IMR-90 (cell line): ENCODE measurements at regions of chr18 and their contacts with region 1.

Region 1: GRCh38 chr18:30280880-30281470 is 761.6 kb downstream of the DSC3 start:
- DNase-seq: peak; percentile 59
- ATAC-seq: peak; percentile 75
- H3K4me3 ChIP-seq: no peak overlapping the region
- H3K27ac ChIP-seq: no peak overlapping the region
- H3K4me1 ChIP-seq: no peaks in the 10 kb centered on the region
- H3K27me3 ChIP-seq: no peaks in the 10 kb centered on the region
- CTCF ChIP-seq: peak; percentile 70
- POLR2A ChIP-seq: no peak
- RAD21 ChIP-seq: peak; percentile 65

Region 2: GRCh38 chr18:28961669-28962228 is 1319.2 kb before region 1 on chr18:
- CTCF ChIA-PET with region 1: no interaction called
- POLR2A ChIA-PET with region 1: no interaction called
- dilution Hi-C with region 1: no loop called
- in situ Hi-C with region 1: no loop called
- intact Hi-C with region 1: loop called (anchors 5 kb)
- DNase-seq: peak; percentile 22
- ATAC-seq: peak; percentile 49
- H3K4me3 ChIP-seq: no peak overlapping the region
- H3K27ac ChIP-seq: no peak overlapping the region
- H3K4me1 ChIP-seq: no peaks in the 10 kb centered on the region
- H3K27me3 ChIP-seq: no peaks in the 10 kb centered on the region
- CTCF ChIP-seq: peak; percentile 66
- POLR2A ChIP-seq: no peak
- RAD21 ChIP-seq: peak; percentile 75

Region 3: DNA sequence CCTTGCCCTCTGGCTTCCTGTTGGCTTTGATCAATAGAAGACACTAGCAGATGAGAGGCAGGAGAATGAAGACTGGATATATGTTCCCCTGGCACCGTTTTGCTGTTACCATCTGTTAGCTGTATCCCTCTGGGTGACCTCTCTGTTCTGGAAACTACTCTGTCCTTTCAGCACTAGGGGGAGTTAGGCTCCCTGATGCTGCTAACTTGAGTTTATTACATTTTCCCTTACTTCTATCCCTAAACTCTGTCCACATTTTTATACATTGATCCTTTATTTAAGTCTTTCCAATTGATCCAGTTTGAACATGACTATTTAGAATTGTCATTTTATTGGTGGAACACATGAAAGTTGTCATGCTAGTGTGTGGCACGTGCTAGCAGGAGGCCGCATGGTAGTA is 1089.7 kb before region 1 on chr18:
- CTCF ChIA-PET with region 1: interaction called, 4 read pairs
- POLR2A ChIA-PET with region 1: no interaction called
- dilution Hi-C with region 1: no loop called
- in situ Hi-C with region 1: no loop called
- intact Hi-C with region 1: loop called (anchors 5 kb)
- DNase-seq: peak; percentile 45
- ATAC-seq: peak; percentile 77
- H3K4me3 ChIP-seq: no peak overlapping the region
- H3K27ac ChIP-seq: no peak overlapping the region
- H3K4me1 ChIP-seq: peaks cover 4% of the 10 kb centered on the region; the same call in 1 of the 2 replicates
- H3K27me3 ChIP-seq: no peaks in the 10 kb centered on the region
- CTCF ChIP-seq: peak; percentile 49
- POLR2A ChIP-seq: no peak
- RAD21 ChIP-seq: peak; percentile 51

Region 4: GRCh38 chr18:29874519-29875098 is 406.4 kb before region 1 on chr18:
- CTCF ChIA-PET with region 1: interaction called, 5 read pairs
- POLR2A ChIA-PET with region 1: no interaction called
- dilution Hi-C with region 1: no loop called
- in situ Hi-C with region 1: no loop called
- intact Hi-C with region 1: loop called (anchors 1 kb)
- DNase-seq: peak; percentile 20
- ATAC-seq: peak; percentile 40; the same call in 1 of the 2 replicates
- H3K4me3 ChIP-seq: no peak overlapping the region
- H3K27ac ChIP-seq: no peak overlapping the region
- H3K4me1 ChIP-seq: no peaks in the 10 kb centered on the region
- H3K27me3 ChIP-seq: no peaks in the 10 kb centered on the region
- CTCF ChIP-seq: peak; percentile 57
- POLR2A ChIP-seq: no peak
- RAD21 ChIP-seq: peak; percentile 50

Region 5: DNA sequence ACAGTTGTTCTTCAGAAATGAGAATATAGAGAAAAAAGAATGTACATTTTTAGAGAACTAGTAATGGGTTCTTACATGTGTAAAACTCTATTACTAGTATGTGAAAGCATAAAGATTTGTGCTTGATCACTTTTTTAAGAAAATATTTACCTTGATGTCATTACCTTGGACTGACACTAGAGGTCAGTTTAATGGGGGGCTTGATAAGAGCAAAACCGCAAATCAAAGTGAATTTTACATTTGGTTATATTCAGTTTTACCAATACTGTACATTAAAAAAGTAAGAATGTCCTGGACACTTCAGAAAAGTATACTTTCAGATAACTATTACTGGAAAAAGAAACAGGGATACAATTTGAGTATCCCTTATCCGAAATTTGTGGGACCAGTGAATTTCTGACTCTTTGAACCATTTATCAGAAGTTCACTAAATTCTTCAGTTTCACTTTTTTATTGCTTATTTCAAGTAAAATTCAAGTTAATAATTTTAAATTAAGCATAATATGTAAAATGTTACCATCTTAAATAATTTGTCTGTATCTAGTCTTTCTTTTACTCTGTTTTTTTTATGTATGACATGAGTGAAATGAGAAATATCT is 387.9 kb before region 1 on chr18:
- CTCF ChIA-PET with region 1: no interaction called
- POLR2A ChIA-PET with region 1: no interaction called
- dilution Hi-C with region 1: no loop called
- in situ Hi-C with region 1: no loop called
- intact Hi-C with region 1: loop called (anchors 1 kb)
- DNase-seq: no peak
- ATAC-seq: no peak
- H3K4me3 ChIP-seq: no peak overlapping the region
- H3K27ac ChIP-seq: no peak overlapping the region
- H3K4me1 ChIP-seq: no peaks in the 10 kb centered on the region
- H3K27me3 ChIP-seq: no peaks in the 10 kb centered on the region
- CTCF ChIP-seq: peak; percentile 41
- POLR2A ChIP-seq: no peak
- RAD21 ChIP-seq: no peak

Region 6: DNA sequence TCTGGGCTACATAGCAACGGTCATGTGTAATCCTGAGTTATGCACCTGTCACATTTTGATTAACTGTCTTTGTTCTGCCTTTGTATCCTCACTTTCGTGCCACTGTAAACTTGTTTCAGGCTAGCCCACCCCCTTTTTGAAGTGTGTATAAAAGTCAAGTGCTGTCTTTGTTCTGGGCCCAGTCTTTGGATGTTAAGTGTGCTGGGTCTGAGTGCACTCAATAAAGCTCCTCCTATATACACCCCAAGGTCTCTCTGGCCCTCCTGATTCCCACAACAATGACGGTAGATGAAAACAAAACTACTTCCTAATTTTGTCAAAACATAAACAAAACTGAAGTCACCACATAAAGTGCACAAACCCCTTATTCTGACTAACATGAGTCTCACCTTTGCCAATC is 128.1 kb after region 1 on chr18:
- CTCF ChIA-PET with region 1: no interaction called
- POLR2A ChIA-PET with region 1: no interaction called
- dilution Hi-C with region 1: no loop called
- in situ Hi-C with region 1: no loop called
- intact Hi-C with region 1: no loop called
- DNase-seq: no peak
- ATAC-seq: no peak
- H3K4me3 ChIP-seq: no peak overlapping the region
- H3K27ac ChIP-seq: no peak overlapping the region
- H3K4me1 ChIP-seq: no peaks in the 10 kb centered on the region
- H3K27me3 ChIP-seq: no peaks in the 10 kb centered on the region
- CTCF ChIP-seq: no peak
- POLR2A ChIP-seq: no peak
- RAD21 ChIP-seq: no peak